ENCODE measurements at regions of chr2 and their contacts with region 1.

Region 1: GRCh38 chr2:84905181-84906107 is at the start of gene TMSB10:
- DNase-seq: peak; percentile 88 to 95 (median 92)
- H3K4me3 ChIP-seq: peak within 1 kb of the TSS; percentile 69 to 92
- H3K4me3 Mint-ChIP-seq: peak within 1 kb of the TSS; percentile 90 to 97 (median 96)
- H3K27ac ChIP-seq: peak within 1 kb of the TSS; percentile 71
- H3K27ac Mint-ChIP-seq: peak within 1 kb of the TSS; percentile 90 to 97 (median 95)
- H3K4me1 ChIP-seq: peaks cover 34% of the 10 kb centered on the region
- H3K4me1 Mint-ChIP-seq: peaks cover 46 to 74% (median 52%) of the 10 kb centered on the region in 4 donors
- H3K27me3 ChIP-seq: no peaks in the 10 kb centered on the region
- H3K27me3 Mint-ChIP-seq: no peaks in the 10 kb centered on the region
- total RNA-seq, gene TMSB10: 1,218 to 1,245 TPM

Region 2: DNA sequence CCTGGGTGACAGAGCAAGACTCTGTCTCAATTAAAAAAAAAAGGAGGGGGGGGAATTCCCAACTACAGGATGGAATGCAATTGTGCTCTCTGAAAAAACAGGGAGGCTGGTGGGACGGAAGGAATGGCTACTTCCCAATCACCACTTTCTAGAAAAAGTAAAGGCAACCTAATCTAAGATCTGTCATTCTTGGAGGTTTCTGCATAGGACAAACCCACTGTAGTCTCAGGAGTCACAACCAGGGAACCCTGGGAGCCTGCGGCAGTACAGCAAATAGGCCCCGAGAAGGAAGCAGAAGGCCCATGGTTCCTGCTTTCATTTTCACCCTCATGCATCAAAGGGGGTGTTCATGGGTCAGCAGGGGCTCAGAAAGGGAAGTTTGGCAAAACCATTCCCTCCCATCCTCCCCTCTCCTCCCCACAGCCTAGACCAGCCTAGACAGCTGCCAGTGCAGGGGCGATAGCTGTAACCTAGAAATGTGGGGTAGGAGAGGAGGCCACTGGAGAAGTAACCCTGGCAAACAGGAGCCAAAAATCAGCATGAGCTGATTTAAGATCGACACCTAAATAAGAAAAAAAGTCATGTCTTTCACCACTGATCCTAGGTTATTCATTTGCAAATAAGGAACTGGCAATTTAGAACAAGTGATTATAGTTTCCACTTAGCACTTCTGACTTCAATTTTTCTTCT is 72.5 kb before region 1 on chr2:
- CTCF ChIA-PET with region 1: no interaction called
- POLR2A ChIA-PET with region 1: interaction called, 12 read pairs
- intact Hi-C with region 1: no loop called
- DNase-seq: peak in 2 of 5 donors; percentile 15 to 38
- H3K4me3 ChIP-seq: peak overlapping the region in 1 of 2 donors; percentile 39
- H3K4me3 Mint-ChIP-seq: peak overlapping the region; percentile 52 to 84 (median 78)
- H3K27ac ChIP-seq: peak overlapping the region; percentile 59
- H3K27ac Mint-ChIP-seq: peak overlapping the region in 4 of 7 donors; percentile 93 to 96 (median 94)
- H3K4me1 ChIP-seq: peaks cover 87% of the 10 kb centered on the region
- H3K4me1 Mint-ChIP-seq: peaks cover 27 to 49% (median 39%) of the 10 kb centered on the region in 4 donors
- H3K27me3 ChIP-seq: no peaks in the 10 kb centered on the region
- H3K27me3 Mint-ChIP-seq: no peaks in the 10 kb centered on the region

Region 3: DNA sequence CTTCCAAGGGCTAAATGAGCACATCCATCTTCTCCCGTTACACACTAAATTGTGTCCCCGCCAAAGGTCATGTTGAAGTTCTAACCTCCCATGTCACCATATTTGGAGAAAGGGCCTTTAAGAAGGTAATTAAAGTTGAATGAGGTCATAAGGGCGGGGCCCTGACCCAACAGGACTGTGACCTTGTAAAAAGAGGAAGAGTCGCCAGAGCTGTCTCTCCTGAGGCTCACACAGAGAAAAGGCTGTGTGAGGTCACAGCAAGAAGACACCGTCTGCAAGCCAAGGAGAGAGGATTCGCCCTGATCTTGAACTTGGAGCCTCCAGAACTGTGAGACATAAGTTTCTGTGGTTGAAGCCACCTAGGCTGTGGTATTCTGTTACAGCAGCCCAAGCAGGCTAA is 48.7 kb before region 1 on chr2:
- CTCF ChIA-PET with region 1: no interaction called
- POLR2A ChIA-PET with region 1: interaction called, 33 read pairs
- intact Hi-C with region 1: no loop called
- DNase-seq: peak in 3 of 5 donors; percentile 29 to 51 (median 30)
- H3K4me3 ChIP-seq: peak overlapping the region in 1 of 2 donors; percentile 23
- H3K4me3 Mint-ChIP-seq: peak overlapping the region; percentile 40 to 89 (median 77)
- H3K27ac ChIP-seq: peak overlapping the region; percentile 53
- H3K27ac Mint-ChIP-seq: peak overlapping the region; percentile 83 to 97 (median 96)
- H3K4me1 ChIP-seq: peaks cover 98% of the 10 kb centered on the region
- H3K4me1 Mint-ChIP-seq: peaks cover 84 to 97% (median 91%) of the 10 kb centered on the region in 4 donors
- H3K27me3 ChIP-seq: no peaks in the 10 kb centered on the region
- H3K27me3 Mint-ChIP-seq: no peaks in the 10 kb centered on the region

Region 4: GRCh38 chr2:84894758-84895520 is 10.5 kb before region 1 on chr2:
- CTCF ChIA-PET with region 1: interaction called, 24 read pairs
- POLR2A ChIA-PET with region 1: interaction called, 204 read pairs
- intact Hi-C with region 1: loop called (anchors 1 kb)
- DNase-seq: peak in 2 of 5 donors; percentile 36 to 42
- H3K4me3 ChIP-seq: peak overlapping the region in 1 of 2 donors; percentile 13
- H3K4me3 Mint-ChIP-seq: peak overlapping the region; percentile 51 to 75 (median 69)
- H3K27ac ChIP-seq: peak overlapping the region; percentile 50
- H3K27ac Mint-ChIP-seq: peak overlapping the region; percentile 38 to 95 (median 91)
- H3K4me1 ChIP-seq: peaks cover 61% of the 10 kb centered on the region
- H3K4me1 Mint-ChIP-seq: peaks cover 39 to 62% (median 48%) of the 10 kb centered on the region in 4 donors
- H3K27me3 ChIP-seq: no peaks in the 10 kb centered on the region
- H3K27me3 Mint-ChIP-seq: no peaks in the 10 kb centered on the region

Region 5: GRCh38 chr2:84946204-84947009 is 41.0 kb after region 1 on chr2:
- CTCF ChIA-PET with region 1: no interaction called
- POLR2A ChIA-PET with region 1: interaction called, 20 read pairs
- intact Hi-C with region 1: no loop called
- DNase-seq: peak; percentile 47 to 84 (median 52)
- H3K4me3 ChIP-seq: peak overlapping the region in 1 of 2 donors; percentile 11
- H3K4me3 Mint-ChIP-seq: peak overlapping the region; percentile 27 to 84 (median 66)
- H3K27ac ChIP-seq: peak overlapping the region; percentile 33
- H3K27ac Mint-ChIP-seq: peak overlapping the region; percentile 76 to 97 (median 91)
- H3K4me1 ChIP-seq: peaks cover 23% of the 10 kb centered on the region
- H3K4me1 Mint-ChIP-seq: peaks cover 18 to 33% (median 25%) of the 10 kb centered on the region in 4 donors
- H3K27me3 ChIP-seq: no peaks in the 10 kb centered on the region
- H3K27me3 Mint-ChIP-seq: no peaks in the 10 kb centered on the region

Measured in CD4-positive, alpha-beta memory T cell (primary cell).